HEK293 (cell line): ENCODE measurements at regions of chr14 and their contacts with region 1.

Region 1: DNA sequence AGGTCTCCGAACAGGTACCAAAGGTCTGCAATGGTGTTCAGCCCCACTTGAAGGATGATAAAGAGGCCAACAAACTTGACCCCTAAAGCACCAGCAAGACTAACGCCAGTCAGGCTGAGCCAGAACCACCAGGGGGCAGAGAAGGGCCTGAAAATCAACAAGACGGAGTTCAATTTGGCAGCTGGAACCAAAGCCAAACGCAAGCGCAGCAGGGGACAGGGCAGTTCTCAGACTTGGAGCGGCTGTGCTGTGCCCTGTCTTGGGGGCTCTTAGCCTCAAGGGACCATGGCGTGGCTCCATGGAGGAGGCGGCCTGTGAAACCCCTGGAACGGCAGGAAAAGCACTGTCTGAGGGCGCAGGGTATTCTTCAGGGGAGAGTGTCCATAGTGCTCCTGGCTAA is 19.6 kb downstream of the POMT2 start:
- H3K4me3 ChIP-seq: no peak overlapping the region
- H3K27ac ChIP-seq: no peak overlapping the region
- H3K4me1 ChIP-seq: peaks cover 22% of the 10 kb centered on the region
- CTCF ChIP-seq: peak; percentile 78

Region 2: DNA sequence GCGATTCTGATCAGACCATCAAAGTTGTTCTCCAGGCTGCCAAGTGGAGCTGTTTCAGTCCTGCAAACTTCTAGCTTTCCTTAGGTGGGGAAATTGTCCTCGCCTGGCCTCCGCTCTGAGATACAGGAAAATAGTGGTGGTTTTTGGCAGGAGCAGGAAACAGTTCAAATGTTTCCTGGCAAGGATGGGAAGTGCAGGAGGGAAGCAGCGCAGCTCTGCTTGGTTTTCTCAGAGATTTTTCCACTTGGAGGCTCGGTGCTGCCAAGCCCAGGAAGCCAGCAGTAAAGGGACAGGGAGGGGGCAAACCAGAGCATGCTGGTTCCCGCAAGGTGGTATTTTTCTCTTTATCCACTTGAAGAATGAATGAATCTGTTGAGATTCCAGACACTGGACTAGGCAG is 102.5 kb before region 1 on chr14:
- CTCF ChIA-PET with region 1: no interaction called
- POLR2A ChIA-PET with region 1: no interaction called
- H3K4me3 ChIP-seq: no peak overlapping the region
- H3K27ac ChIP-seq: no peak overlapping the region
- H3K4me1 ChIP-seq: no peaks in the 10 kb centered on the region
- CTCF ChIP-seq: no peak

Region 3: DNA sequence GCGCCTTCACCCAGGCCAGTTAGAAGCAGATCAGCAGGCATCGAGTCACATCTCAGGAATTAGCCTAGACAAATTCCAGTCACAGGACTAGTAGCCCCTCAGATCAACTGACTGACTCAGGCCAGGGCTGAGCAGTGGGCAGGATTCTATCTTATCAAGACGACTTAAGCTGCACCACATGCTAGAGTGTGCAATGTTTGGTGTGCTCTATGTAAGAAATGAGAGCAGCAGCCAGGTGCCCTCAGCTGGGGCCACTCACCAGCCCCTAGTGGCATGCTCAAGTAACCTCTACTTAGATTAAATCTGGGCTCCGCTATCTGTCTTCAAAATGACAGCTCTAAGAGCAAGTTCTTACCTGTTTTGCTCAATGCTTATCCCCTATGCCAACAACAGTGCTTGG is 10.4 kb before region 1 on chr14:
- CTCF ChIA-PET with region 1: interaction called, 15 read pairs
- POLR2A ChIA-PET with region 1: no interaction called
- H3K4me3 ChIP-seq: no peak overlapping the region
- H3K27ac ChIP-seq: no peak overlapping the region
- H3K4me1 ChIP-seq: no peaks in the 10 kb centered on the region
- CTCF ChIP-seq: no peak